Naive thymus-derived CD8-positive, alpha-beta T cell (primary cell): ENCODE measurements at regions of chr3 and their contacts with region 1.

Region 1: DNA sequence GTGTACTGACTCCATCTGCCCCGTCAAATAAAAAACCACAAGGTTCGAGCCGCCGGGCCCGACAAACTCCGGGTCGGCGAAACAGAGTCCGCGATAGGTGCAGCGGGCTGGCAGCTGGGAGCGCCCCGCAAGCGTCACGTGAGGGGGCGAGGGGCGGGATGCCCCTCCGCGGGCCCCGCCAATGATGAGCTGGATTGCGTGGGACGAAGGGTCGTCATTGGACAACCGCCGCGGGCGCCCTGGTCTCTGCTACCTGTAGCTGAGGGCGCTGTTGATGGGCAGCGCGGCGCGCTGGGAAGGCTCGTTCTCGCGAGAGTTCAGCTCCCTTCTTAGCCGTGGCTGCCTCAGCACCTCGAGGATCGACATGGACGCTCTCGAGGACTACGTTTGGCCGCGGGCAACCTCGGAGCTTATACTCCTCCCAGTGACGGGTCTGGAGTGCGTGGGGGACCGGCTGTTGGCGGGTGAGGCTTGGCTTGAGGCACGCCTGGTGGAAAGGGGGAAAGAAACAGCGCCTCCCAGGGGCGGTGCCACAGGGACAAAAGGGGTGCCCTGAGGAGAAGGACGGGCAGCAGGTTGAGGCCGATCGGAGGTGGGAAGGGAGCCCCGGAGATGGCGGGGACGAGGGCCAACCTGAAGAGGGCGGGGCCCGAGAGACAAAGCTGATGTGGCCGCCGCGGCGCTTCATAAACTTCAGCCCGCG is at the start of gene WDR6:
- DNase-seq: peak; percentile 95 to 99 (median 97)
- ATAC-seq: peak; percentile 92 to 93
- H3K4me3 Mint-ChIP-seq: peak within 1 kb of the TSS; percentile 94 to 100 (median 99)
- H3K27ac Mint-ChIP-seq: peak within 1 kb of the TSS; percentile 97 to 100 (median 99)
- H3K4me1 Mint-ChIP-seq: peaks cover 24 to 46% (median 29%) of the 10 kb centered on the region in 4 donors
- H3K27me3 Mint-ChIP-seq: no peaks in the 10 kb centered on the region
- polyA plus RNA-seq, gene WDR6: 96.3 to 126 (median 111) TPM

Region 2: DNA sequence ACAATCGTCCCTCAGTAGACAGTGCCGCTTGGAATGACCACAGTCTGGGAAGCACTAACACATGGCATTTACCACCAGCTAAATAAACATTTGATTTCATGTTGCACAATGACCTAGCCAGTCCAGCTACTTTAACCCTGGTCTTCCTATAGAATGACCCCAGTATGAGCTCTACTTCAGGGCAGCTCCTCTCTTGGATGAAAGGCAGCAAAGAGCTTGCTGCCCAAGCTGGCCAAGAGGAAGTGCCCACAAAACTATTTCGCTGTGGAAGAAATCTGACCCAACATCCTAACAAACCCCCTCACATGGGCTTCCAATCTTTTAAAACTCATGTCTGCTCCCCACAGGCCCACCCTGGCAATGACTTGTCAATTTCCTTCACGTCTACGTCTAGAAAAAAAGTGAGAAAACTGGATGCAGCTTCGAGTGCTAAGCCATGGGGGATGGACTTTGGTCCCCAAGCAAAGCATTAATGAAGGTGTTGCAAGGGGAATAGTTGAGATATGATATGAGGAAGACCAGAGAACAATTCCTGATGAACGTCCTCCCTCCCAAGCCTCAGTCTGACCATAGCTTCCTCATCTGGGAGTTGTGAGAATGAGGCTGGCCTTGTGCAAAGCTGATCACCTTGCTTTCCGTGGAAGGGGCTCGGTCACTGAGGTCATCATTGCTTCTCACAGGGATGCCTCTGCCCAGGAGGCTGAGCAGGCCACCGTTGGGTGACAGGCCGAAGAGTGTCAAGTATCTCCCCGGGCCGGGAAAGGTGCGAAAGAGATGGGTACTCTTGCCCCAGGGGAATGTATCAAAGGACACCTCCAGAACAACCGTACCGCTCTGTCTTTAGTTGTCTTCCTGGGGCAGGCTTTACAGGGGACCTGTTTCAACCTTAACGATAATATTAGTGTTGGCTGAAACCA is 109.5 kb before region 1 on chr3:
- POLR2A ChIA-PET with region 1: no interaction called
- DNase-seq: peak in 2 of 10 donors; percentile 1 to 4
- ATAC-seq: peak; percentile 6 to 26
- H3K4me3 Mint-ChIP-seq: peak overlapping the region; percentile 92 to 97 (median 95)
- H3K27ac Mint-ChIP-seq: peak overlapping the region; percentile 83 to 97 (median 95)
- H3K4me1 Mint-ChIP-seq: peaks cover 16 to 53% (median 45%) of the 10 kb centered on the region in 4 donors
- H3K27me3 Mint-ChIP-seq: no peaks in the 10 kb centered on the region

Region 3: GRCh38 chr3:49021813-49022687 is 14.8 kb after region 1 on chr3 and contains the start of gene NDUFAF3:
- POLR2A ChIA-PET with region 1: interaction called, 278 read pairs
- DNase-seq: peak; percentile 81 to 93 (median 90)
- ATAC-seq: peak; percentile 77 to 83
- H3K4me3 Mint-ChIP-seq: peak within 1 kb of the TSS; percentile 90 to 99 (median 98)
- H3K27ac Mint-ChIP-seq: peak within 1 kb of the TSS; percentile 96 to 99 (median 98)
- H3K4me1 Mint-ChIP-seq: peaks cover 12 to 65% (median 52%) of the 10 kb centered on the region in 4 donors
- H3K27me3 Mint-ChIP-seq: peaks cover 0 to 1% (median 0%) of the 10 kb centered on the region in 5 donors
- polyA plus RNA-seq, gene NDUFAF3: 140 to 226 (median 202) TPM

Region 4: GRCh38 chr3:49028673-49029562 is 21.7 kb after region 1 on chr3 and contains the start of gene IMPDH2:
- POLR2A ChIA-PET with region 1: interaction called, 278 read pairs
- DNase-seq: peak; percentile 88 to 95 (median 92)
- ATAC-seq: peak; percentile 92 to 93
- H3K4me3 Mint-ChIP-seq: peak within 1 kb of the TSS; percentile 87 to 96 (median 96)
- H3K27ac Mint-ChIP-seq: peak within 1 kb of the TSS; percentile 93 to 100 (median 99)
- H3K4me1 Mint-ChIP-seq: peaks cover 19 to 45% (median 38%) of the 10 kb centered on the region in 4 donors
- H3K27me3 Mint-ChIP-seq: no peaks in the 10 kb centered on the region
- polyA plus RNA-seq, gene IMPDH2: 97.3 to 121 (median 118) TPM

Region 5: GRCh38 chr3:49076646-49077045 is 69.4 kb after region 1 on chr3:
- POLR2A ChIA-PET with region 1: no interaction called
- DNase-seq: no peak
- ATAC-seq: no peak
- H3K4me3 Mint-ChIP-seq: no peak overlapping the region
- H3K27ac Mint-ChIP-seq: peak overlapping the region in 2 of 10 donors; percentile 39 to 65
- H3K4me1 Mint-ChIP-seq: peaks cover 6 to 39% (median 11%) of the 10 kb centered on the region in 4 donors
- H3K27me3 Mint-ChIP-seq: no peaks in the 10 kb centered on the region

Region 6: GRCh38 chr3:49173116-49173791 is 166.0 kb after region 1 on chr3:
- POLR2A ChIA-PET with region 1: no interaction called
- DNase-seq: peak in 1 of 10 donors; percentile 46
- ATAC-seq: no peak
- H3K4me3 Mint-ChIP-seq: no peak overlapping the region
- H3K27ac Mint-ChIP-seq: peak overlapping the region in 1 of 10 donors; percentile 18
- H3K4me1 Mint-ChIP-seq: peaks cover 14 to 32% (median 26%) of the 10 kb centered on the region in 4 donors
- H3K27me3 Mint-ChIP-seq: no peaks in the 10 kb centered on the region